Endothelial cell of umbilical vein (primary cell): ENCODE measurements at regions of chr4 and their contacts with region 1.

Region 1: GRCh38 chr4:156169011-156169410 is 215.3 kb upstream of the CTSO start:
- DNase-seq: peak; percentile 42
- H3K4me3 ChIP-seq: no peak overlapping the region
- H3K27ac ChIP-seq: no peak overlapping the region
- H3K4me1 ChIP-seq: no peaks in the 10 kb centered on the region
- H3K27me3 ChIP-seq: no peaks in the 10 kb centered on the region
- CTCF ChIP-seq: peak; percentile 16 to 45
- POLR2A ChIP-seq: no peak

Region 2: GRCh38 chr4:156242389-156242788 is 73.4 kb after region 1 on chr4:
- CTCF ChIA-PET with region 1: no interaction called
- POLR2A ChIA-PET with region 1: no interaction called
- dilution Hi-C with region 1: no loop called
- intact Hi-C with region 1: no loop called
- DNase-seq: no peak
- H3K4me3 ChIP-seq: no peak overlapping the region
- H3K27ac ChIP-seq: no peak overlapping the region
- H3K4me1 ChIP-seq: no peaks in the 10 kb centered on the region
- H3K27me3 ChIP-seq: no peaks in the 10 kb centered on the region
- CTCF ChIP-seq: no peak
- POLR2A ChIP-seq: no peak

Region 3: DNA sequence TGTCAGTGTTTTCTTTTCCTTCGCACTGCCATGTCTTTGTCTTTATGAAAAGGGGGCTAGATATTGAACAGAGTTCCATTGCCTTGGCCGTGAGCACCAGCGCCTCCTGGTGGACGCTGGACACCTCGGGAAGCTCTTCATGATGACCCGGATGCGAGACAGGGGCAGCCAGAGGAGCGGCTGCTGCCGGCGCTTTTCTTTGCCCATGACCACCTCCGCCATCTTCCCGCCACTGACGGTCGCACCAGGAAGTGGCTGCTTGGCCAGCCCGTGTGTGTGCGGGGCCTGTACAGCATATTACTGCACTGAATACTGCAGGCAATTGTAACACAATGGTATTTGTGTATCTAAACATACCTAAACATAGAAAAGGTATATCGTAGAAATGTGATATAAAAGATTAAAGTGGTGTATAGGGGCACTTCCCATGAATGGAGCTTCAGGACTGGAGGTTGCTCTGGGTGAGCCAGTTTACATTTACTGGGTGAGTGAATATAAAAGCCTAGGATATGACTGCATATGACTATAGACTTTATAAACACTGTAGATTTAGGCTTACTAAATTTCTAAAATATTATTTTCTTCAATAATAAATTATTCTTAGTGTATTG is 1035.7 kb after region 1 on chr4:
- CTCF ChIA-PET with region 1: interaction called, 3 read pairs
- POLR2A ChIA-PET with region 1: no interaction called
- dilution Hi-C with region 1: no loop called
- intact Hi-C with region 1: loop called (anchors 5 kb)
- DNase-seq: no peak
- H3K4me3 ChIP-seq: no peak overlapping the region
- H3K27ac ChIP-seq: no peak overlapping the region
- H3K4me1 ChIP-seq: no peaks in the 10 kb centered on the region
- H3K27me3 ChIP-seq: no peaks in the 10 kb centered on the region
- CTCF ChIP-seq: peak; percentile 42 to 49
- POLR2A ChIP-seq: no peak